BJ (cell line): ENCODE measurements at regions of chr14 and their contacts with region 1.

Region 1: DNA sequence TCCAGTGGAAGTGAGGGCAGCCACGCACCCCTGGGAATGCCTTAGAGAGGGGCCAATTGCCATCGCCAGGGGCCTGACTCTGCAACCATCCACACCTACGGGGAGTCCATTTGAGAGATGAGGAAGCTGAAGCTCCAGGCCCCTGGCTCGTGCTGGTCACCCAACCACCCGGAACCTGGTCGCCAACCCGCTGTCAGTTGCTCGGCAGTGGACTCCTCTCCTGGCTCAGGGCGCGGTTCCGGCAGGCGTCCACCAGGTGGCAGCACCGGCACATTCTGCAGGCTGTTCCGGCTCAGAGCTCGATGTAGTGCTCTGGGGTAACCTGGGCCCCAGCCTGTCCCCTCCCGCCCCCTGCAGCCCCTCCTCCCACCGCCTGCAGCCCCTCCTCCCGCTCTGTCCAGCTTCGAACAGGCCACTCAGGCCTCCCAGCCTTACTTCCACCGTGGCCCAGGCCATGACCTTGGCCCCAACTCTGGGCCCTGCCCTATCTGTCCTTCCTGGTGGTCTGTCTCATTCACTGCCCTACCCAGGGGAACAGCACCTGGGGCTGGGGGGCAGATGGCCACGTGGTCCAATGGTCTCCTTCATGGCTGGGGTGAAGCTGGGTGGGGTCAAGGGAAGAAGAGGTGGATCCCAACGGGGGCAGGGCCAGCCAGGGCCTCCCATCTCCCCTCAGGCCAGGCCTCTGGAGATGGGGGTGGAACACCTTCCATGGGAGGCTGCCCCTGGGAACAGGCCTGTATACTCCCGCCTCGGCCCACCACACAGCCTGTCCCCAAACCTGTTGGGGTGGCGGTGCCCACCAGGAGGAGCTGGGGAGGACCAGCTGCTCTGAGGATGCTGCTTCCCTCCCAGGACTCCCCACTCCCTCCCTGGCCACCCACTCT is 15.7 kb downstream of the SIVA1 start:
- DNase-seq: peak; percentile 6
- H3K4me3 ChIP-seq: no peak overlapping the region
- H3K27me3 ChIP-seq: no peaks in the 10 kb centered on the region
- CTCF ChIP-seq: peak; percentile 92

Region 2: DNA sequence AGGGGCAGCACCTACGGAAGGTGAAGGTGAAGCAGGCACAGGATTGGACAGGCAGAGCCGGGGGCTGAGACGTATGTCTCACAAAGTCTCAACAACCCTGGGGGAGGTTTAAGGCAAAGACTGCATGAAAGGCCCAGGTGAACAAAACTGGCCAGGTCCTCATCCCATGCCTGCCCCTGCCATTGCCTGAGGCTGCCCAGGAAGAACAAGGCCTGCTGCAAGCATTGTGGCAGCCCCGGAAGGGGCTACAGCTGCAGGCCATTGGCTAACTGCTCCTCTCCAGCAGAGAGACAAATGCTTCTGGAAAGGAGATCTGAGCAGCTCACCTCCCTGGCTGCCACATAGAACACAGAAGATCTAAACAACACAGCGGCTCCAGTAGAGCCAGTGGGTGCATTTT is 143.7 kb before region 1 on chr14:
- CTCF ChIA-PET with region 1: no interaction called
- POLR2A ChIA-PET with region 1: no interaction called
- DNase-seq: no peak
- H3K4me3 ChIP-seq: no peak overlapping the region
- H3K27me3 ChIP-seq: peaks cover 10% of the 10 kb centered on the region
- CTCF ChIP-seq: no peak

Region 3: DNA sequence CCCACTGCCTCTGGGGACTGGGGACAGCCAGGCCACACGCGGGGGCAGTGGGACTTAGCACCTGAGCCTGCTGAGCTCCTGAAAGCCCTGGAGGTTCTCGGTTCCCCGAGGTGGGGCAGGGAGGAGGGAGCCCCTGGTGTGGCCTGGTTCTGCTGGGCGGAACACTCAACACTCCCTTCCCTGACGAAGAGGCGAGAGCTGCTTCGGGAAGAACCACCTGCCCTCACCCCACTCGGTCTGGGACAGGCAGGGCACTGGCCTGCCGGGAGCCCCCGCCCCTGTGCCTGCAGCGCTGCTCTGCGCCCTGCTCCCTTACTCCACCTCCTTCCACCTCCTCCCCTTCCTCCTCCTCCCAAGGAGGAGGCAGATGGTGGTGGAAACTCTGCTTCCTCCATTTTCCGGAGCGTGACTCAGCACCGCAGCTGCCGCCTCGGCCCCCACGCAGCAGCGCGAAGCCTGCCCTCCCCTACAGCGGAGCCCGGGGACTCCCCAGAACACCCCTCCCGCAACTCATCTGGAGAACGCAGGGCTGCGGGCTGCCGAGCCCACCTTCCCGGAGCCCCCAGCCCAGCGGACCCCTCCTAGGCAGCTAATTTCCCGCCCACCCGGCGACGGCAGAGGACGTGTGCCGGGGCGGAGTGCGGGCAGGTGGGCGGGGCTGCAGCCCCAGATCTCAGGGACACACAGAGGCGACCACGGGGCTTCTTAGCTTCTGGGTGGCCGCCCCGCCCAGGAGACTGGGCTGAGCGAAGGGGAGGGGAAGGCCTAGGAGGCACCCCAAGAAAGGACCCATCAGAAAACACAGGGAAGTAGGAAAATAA is 91.0 kb before region 1 on chr14:
- CTCF ChIA-PET with region 1: no interaction called
- POLR2A ChIA-PET with region 1: no interaction called
- DNase-seq: no peak
- H3K4me3 ChIP-seq: peak overlapping the region; percentile 49
- H3K27me3 ChIP-seq: no peaks in the 10 kb centered on the region
- CTCF ChIP-seq: no peak

Region 4: GRCh38 chr14:104735830-104736642 is 32.6 kb before region 1 on chr14:
- CTCF ChIA-PET with region 1: interaction called, 10 read pairs
- POLR2A ChIA-PET with region 1: no interaction called
- DNase-seq: peak; percentile 29
- H3K4me3 ChIP-seq: no peak overlapping the region
- H3K27me3 ChIP-seq: no peaks in the 10 kb centered on the region
- CTCF ChIP-seq: no peak

Region 5: DNA sequence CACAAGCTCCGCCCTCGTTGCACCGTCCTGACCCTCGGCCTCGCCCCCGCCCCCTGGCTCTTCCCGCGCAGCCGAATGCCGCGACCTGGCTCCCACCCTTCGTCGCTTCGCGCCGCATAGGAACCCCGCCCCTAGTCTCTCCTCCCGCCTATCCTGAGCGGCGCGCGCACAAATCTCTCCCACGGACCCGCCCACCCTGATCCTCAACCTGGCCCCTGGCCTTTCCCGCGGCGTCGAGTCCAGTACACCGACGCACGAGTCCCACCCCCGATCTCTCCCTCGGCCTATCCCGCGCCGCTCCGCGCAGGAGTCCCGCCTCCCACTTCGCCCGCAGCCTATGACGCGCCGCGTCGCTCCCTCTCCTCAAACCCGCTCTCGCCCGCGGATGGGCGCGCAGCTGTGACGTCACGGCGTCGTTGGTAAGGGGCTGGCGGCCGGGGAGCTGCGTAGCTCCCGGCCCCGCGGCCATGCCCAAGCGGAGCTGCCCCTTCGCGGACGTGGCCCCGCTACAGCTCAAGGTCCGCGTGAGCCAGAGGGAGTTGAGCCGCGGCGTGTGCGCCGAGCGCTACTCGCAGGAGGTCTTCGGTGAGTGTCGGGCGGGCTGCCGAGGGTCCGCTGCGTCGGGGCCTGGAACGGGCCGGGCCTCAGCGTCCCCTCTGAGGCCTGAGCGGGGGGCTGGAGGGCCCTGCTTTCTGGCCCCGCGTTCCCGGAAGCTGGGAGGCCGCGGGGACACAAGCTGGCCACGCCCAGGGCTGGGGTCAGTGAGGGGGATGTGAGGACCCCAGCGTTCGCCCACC is 15.7 kb before region 1 on chr14 and contains the start of gene SIVA1:
- CTCF ChIA-PET with region 1: interaction called, 43 read pairs
- POLR2A ChIA-PET with region 1: no interaction called
- DNase-seq: peak; percentile 94
- H3K4me3 ChIP-seq: peak within 1 kb of the TSS; percentile 97
- H3K27me3 ChIP-seq: no peaks in the 10 kb centered on the region
- CTCF ChIP-seq: no peak
- polyA plus RNA-seq, gene SIVA1: 83.5 and 116 TPM in 2 replicates

Region 6: GRCh38 chr14:104794641-104795467 is 26.2 kb after region 1 on chr14:
- CTCF ChIA-PET with region 1: interaction called, 10 read pairs
- POLR2A ChIA-PET with region 1: no interaction called
- DNase-seq: no peak
- H3K4me3 ChIP-seq: peak overlapping the region; percentile 78
- H3K27me3 ChIP-seq: no peaks in the 10 kb centered on the region
- CTCF ChIP-seq: peak; percentile 21

Region 7: DNA sequence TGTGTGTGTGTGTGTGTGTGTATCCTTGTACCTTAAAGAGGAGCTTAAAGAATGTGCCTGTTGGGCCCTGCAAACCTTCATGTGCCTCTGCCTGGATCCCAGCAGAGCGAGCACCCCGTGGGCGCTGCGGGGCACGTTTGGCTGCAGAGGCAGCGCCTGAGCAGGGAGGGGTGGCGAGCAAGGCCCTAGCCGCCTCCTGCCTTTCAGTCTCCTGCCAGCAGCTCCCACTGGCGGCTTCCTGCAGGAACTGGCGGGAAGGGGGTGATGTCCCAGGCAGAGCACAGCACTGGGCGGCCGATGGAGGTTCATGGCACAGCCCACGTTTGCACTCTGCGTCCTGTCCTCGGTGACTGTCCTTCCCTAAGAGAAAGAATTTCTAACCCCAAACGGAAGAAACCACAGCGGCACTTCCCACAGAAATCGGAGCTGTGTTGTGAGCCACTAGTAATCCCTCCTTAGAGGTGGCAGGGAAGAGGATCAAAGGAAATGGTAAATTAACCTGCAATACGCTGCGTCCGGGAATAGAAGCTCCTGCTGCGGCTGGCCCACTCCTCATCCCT is 52.1 kb after region 1 on chr14:
- CTCF ChIA-PET with region 1: interaction called, 76 read pairs
- POLR2A ChIA-PET with region 1: no interaction called
- DNase-seq: no peak
- H3K4me3 ChIP-seq: no peak overlapping the region
- H3K27me3 ChIP-seq: no peaks in the 10 kb centered on the region
- CTCF ChIP-seq: peak; percentile 82

Region 8: GRCh38 chr14:104826189-104826860 is 57.6 kb after region 1 on chr14:
- CTCF ChIA-PET with region 1: interaction called, 76 read pairs
- POLR2A ChIA-PET with region 1: interaction called, 12 read pairs
- DNase-seq: peak; percentile 9
- H3K4me3 ChIP-seq: peak overlapping the region; percentile 57
- H3K27me3 ChIP-seq: no peaks in the 10 kb centered on the region
- CTCF ChIP-seq: peak; percentile 51

Region 9: GRCh38 chr14:104895786-104896661 is 127.3 kb after region 1 on chr14:
- CTCF ChIA-PET with region 1: interaction called, 17 read pairs
- POLR2A ChIA-PET with region 1: no interaction called
- DNase-seq: no peak
- H3K4me3 ChIP-seq: no peak overlapping the region
- H3K27me3 ChIP-seq: no peaks in the 10 kb centered on the region
- CTCF ChIP-seq: no peak

Region 10: DNA sequence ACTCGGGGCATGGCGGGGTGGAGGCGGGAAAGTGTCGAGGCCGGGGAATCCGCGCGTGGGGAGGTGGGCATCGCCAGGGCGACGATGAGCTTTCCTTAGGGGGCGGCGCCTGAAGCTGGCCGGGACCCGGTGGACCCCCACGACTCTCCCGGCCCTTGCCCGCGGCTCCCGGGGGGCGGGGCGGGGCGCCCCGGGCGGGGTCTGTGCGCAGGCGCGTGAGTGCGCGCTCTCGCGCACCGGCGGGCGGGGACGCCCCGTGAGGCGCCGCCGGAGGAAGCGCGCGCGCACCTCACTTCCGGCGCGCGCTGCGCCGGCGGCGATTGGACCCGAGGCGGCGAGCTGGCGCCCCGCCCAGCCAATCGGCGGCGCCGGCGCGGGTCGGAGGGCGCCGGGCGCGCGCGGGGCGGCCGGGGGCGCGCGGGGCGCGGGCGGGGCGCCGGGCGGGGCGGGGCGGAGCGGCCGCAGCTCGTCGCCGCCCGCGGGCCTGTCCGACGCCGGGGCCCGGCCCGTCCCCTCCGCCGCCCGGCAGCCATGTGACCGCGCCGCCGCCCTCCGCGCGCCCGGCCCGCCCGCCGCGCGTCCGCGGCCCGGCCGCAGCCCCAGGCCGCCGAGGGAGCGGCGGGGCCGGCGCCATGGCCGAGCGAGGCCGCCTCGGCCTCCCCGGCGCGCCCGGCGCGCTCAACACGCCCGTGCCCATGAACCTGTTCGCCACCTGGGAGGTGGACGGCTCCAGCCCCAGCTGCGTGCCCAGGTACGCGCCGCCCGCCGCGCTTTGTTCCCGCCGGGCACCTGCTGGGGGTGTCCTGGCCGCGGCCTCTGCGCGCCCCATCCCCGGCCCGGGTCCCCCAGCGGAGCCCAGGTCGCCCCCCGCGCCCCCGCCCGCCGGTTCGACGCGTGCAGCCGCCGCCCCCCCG is 545.9 kb after region 1 on chr14 and contains the start of gene PACS2:
- CTCF ChIA-PET with region 1: no interaction called
- POLR2A ChIA-PET with region 1: no interaction called
- DNase-seq: no peak
- H3K4me3 ChIP-seq: peak within 1 kb of the TSS; percentile 64
- H3K27me3 ChIP-seq: no peaks in the 10 kb centered on the region
- CTCF ChIP-seq: no peak
- polyA plus RNA-seq, gene PACS2: 13.4 and 21.4 TPM in 2 replicates